ENCODE measurements at regions of chr6 and their contacts with region 1.

Region 1: GRCh38 chr6:52399511-52400312 is 20.4 kb upstream of the EFHC1 start:
- DNase-seq: peak; percentile 50
- CTCF ChIP-seq: peak; percentile 85

Region 2: GRCh38 chr6:52027699-52028098 is 372.0 kb before region 1 on chr6:
- in situ Hi-C with region 1: no loop called
- DNase-seq: no peak
- CTCF ChIP-seq: no peak

Region 3: GRCh38 chr6:52243282-52243893 is 156.3 kb before region 1 on chr6:
- in situ Hi-C with region 1: no loop called
- DNase-seq: no peak
- CTCF ChIP-seq: no peak

Region 4: GRCh38 chr6:52293067-52293466 is 106.6 kb before region 1 on chr6:
- in situ Hi-C with region 1: loop called (anchors 5 kb)
- DNase-seq: no peak
- CTCF ChIP-seq: no peak